ENCODE measurements at regions of chr6 and their contacts with region 1.

Region 1: GRCh38 chr6:95569560-95569959 is 7.8 kb upstream of the MANEA start:
- DNase-seq: no peak
- H3K4me3 ChIP-seq: no peak overlapping the region
- H3K27ac ChIP-seq: no peak overlapping the region
- H3K4me1 ChIP-seq: peaks cover 26% of the 10 kb centered on the region
- H3K27me3 ChIP-seq: no peaks in the 10 kb centered on the region
- CTCF ChIP-seq: no peak

Region 2: DNA sequence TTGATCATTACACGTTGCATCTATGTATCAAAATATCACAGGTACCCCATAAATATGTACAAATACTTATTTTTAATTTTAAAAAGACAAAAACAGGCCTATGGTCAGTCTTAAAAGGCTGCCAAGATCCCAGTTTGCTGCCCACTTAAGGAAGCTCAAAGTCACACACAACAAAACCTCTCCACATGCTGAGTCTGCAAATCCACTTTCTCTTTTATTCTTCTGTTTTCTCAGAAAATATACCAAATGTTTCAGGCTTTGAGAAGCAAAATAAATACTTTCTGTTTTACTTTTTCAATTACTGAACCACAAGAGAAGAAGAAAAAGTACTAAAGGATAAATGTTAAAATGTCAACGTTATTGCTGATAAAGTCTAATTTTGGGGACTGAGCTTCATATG is 100.0 kb before region 1 on chr6:
- CTCF ChIA-PET with region 1: no interaction called
- POLR2A ChIA-PET with region 1: no interaction called
- intact Hi-C with region 1: no loop called
- DNase-seq: no peak
- H3K4me3 ChIP-seq: no peak overlapping the region
- H3K27ac ChIP-seq: no peak overlapping the region
- H3K4me1 ChIP-seq: no peaks in the 10 kb centered on the region
- H3K27me3 ChIP-seq: no peaks in the 10 kb centered on the region
- CTCF ChIP-seq: no peak

Region 3: DNA sequence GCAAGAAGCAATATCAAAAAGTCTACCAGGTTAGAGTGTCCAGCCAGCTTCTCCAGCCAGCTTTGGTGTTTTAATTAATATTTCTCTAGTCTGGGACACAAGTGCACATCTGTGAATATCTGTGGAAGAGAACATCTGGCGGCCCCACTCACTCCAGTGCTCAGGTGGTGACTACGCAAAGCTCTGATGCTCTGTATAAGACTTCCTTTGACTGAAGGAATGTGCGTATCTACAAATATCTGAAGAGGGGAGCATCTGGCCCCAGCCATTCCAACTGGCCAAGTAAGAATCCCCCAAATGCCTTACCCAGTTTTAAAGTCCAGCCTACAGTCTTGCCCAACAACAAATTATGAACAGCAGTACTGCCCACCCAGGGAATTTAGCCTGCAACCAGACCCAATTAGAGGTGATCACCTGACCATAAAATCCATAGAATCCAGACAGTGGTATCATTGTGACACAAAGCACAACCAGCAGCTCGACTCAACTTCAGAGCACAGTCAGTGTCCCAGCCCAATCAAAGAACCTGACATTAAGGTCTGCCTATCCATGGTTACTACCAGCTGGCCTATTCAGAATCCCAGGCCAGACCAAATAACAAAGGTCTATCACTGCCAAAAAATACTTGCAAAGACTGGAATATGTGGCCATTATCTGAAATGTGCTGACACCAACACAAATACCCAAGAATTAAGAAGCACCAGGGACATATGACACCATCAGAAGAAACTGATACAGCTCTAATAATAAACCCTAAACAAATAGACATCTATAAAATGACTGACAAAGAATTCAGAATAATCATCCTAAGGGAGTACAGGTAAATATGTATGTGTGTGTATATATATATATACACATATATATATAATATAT is 68.3 kb before region 1 on chr6:
- CTCF ChIA-PET with region 1: no interaction called
- POLR2A ChIA-PET with region 1: no interaction called
- intact Hi-C with region 1: loop called (anchors 2 kb)
- DNase-seq: no peak
- H3K4me3 ChIP-seq: no peak overlapping the region
- H3K27ac ChIP-seq: no peak overlapping the region
- H3K4me1 ChIP-seq: no peaks in the 10 kb centered on the region
- H3K27me3 ChIP-seq: no peaks in the 10 kb centered on the region
- CTCF ChIP-seq: no peak